ENCODE measurements at regions of chr11 and their contacts with region 1.

Region 1: DNA sequence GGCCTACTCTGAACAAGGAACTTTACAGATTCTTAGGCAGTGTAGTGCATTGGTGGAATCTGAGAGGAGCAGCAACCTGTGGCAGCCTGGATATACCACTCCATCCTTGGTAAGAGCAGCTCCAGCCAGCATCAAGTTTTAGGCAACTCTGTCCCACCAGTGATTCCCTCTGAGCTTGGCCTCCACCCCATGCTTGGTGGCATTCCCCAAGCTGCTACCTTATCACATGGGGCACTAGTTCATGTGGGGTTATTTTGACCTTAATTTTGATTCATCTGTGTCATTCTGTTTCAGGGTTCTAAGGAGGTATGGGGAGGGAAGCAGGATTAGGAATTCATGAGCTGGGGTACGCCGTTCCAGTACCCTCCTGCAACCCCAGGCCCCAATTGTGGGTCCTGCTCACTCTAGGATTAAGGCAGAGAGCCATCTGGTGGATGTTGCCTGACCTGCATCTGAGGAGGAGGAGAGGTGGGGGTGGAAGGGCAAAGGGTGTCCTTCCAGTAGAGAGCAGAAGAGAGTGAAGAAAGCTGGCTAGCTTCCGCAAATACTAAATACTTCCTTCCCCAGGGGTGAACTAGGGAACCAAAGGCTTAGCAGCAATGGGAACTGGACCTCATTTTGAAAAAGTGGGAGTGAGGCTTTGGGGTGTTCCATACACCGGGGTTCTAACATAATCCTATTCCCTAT is 10.5 kb downstream of the LRRC51 start:
- H3K4me3 ChIP-seq: no peak overlapping the region
- H3K27ac ChIP-seq: no peak overlapping the region
- H3K4me1 ChIP-seq: no peaks in the 10 kb centered on the region
- CTCF ChIP-seq: peak; percentile 85

Region 2: DNA sequence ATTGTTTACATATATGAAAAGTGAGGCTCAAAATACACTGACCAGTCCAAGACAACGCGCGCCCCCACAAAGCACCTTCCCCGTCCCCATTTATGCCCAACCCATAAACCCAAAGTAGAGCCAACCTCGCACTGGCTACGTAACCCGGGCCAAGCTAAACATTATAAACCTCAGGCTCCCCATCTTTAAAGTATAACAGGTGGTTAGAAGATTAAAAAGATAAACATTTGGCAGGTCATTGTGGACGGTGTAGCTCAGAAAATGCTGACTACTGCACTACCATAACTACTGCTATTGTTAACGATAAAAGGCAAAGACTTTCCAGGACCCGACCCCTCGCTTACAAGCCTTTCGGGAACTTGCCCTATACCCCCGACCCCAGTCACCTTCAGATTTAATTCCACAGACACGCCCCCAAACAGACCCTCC is 11.3 kb before region 1 on chr11:
- CTCF ChIA-PET with region 1: interaction called, 13 read pairs
- POLR2A ChIA-PET with region 1: interaction called, 3 read pairs
- H3K4me3 ChIP-seq: peak overlapping the region; percentile 77
- H3K27ac ChIP-seq: peak overlapping the region; percentile 57
- H3K4me1 ChIP-seq: no peaks in the 10 kb centered on the region
- CTCF ChIP-seq: no peak

Region 3: DNA sequence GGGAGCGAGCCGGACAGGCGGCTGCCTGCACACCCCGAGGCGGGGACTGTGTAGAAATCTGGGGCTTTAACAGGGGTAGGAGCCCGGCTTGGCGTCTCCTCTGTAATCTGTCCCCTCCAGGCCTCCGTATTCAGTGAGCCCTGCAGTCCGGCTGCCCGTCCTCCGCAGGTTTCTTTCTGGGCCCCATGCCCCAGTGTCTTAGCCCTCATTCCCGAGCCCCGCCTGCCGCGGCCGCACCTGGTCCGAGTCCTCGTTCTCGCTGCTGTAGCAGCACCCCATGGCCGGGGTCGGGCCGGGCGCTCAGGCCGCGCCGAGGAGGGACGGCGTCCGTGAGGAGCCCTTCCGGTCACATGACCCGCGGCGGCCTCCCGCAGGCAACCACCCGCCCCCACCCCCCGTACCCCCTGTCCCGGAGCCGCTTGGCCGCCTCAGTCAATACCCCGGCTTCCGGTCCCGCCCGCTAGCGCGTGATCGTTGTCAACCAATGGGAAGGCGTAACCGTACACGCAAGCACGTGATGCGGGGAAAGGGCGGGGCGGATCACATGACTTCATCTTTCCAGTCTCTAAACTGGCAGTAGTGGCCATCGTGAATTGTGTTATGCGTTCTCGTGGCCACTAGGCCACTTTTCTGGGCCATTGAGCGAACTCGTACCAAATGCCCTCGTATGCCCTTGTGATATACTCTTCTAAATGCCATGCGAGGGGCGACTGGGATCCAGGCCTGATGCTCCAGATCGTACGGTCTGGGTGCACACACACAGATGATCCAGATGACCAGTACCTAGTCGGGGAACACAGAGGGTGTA is 12.0 kb after region 1 on chr11 and contains the start of gene LAMTOR1:
- CTCF ChIA-PET with region 1: interaction called, 18 read pairs
- POLR2A ChIA-PET with region 1: interaction called, 4 read pairs
- H3K4me3 ChIP-seq: peak within 1 kb of the TSS; percentile 87
- H3K27ac ChIP-seq: peak within 1 kb of the TSS; percentile 75
- H3K4me1 ChIP-seq: no peaks in the 10 kb centered on the region
- CTCF ChIP-seq: peak; percentile 45; the same call in 1 of the 2 replicates

Region 4: DNA sequence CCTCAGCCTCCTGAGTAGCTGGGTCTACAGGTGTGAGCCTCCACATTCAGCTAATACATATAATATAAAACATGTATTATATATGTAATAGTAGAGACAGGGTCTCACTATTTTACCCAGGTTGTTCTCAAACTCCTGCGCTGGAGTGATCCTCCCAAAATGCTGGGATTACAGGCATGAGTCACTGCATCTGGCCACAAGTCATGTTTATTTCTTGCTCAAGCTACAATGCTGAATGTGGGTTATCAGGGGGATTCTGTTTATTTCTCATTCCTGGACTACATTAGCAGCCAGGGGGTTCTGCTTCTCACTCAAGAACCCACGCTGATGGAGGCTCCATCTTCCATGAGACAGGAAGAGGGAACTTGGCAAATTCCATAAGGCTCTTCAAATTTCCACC is 69.2 kb after region 1 on chr11:
- CTCF ChIA-PET with region 1: no interaction called
- POLR2A ChIA-PET with region 1: no interaction called
- H3K4me3 ChIP-seq: no peak overlapping the region
- H3K27ac ChIP-seq: no peak overlapping the region
- H3K4me1 ChIP-seq: no peaks in the 10 kb centered on the region
- CTCF ChIP-seq: no peak